Panc1 (cell line): ENCODE measurements at regions of chr11 and their contacts with region 1.

Region 1: DNA sequence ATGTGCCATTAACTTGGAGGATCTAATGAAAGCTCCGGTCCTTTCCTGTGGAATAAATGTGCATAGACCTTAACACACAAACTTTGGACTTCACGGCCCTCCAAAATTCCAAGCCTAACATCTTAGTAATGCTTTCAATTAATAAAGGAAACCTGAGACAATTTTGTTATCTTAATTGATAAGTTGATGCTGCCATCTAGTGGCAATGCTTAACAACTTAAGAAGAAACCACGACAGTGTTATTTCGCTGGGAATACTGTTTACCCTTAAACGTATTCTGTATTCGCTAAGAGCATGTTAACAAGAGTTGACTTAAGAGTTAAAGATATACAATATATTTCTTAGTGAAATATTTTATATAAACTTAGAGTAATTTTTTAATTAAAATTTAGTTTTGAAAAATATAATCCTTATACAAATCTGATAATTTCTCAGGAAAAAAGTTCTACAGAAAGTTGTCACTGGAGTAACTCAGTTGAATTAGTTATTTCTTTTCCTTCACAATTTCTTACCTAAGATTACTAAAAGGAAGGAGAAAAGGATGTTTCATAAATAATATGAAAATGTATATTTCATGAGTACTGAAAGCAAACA is 35.0 kb upstream of the OR9G4 start:
- DNase-seq: peak; percentile 18
- ATAC-seq: no peak; the same call in 1 of the 2 replicates
- H3K4me3 ChIP-seq: peak overlapping the region in 1 of 2 experiments; percentile 1; a peak in 1 of 4 replicates
- H3K27ac ChIP-seq: no peak overlapping the region
- H3K4me1 ChIP-seq: no peaks in the 10 kb centered on the region
- H3K27me3 ChIP-seq: no peaks in the 10 kb centered on the region
- CTCF ChIP-seq: peak; percentile 49; the same call in 1 of the 2 replicates

Region 2: GRCh38 chr11:55942785-55943392 is 840.7 kb before region 1 on chr11:
- CTCF ChIA-PET with region 1: no interaction called
- POLR2A ChIA-PET with region 1: no interaction called
- in situ Hi-C with region 1: no loop called
- intact Hi-C with region 1: loop called (anchors 2 kb)
- DNase-seq: peak; percentile 22
- ATAC-seq: no peak
- H3K4me3 ChIP-seq: no peak overlapping the region
- H3K27ac ChIP-seq: no peak overlapping the region
- H3K4me1 ChIP-seq: no peaks in the 10 kb centered on the region
- H3K27me3 ChIP-seq: no peaks in the 10 kb centered on the region
- CTCF ChIP-seq: peak; percentile 56; the same call in 1 of the 2 replicates

Region 3: GRCh38 chr11:56522008-56522407 is 261.5 kb before region 1 on chr11:
- CTCF ChIA-PET with region 1: no interaction called
- POLR2A ChIA-PET with region 1: no interaction called
- in situ Hi-C with region 1: no loop called
- intact Hi-C with region 1: loop called (anchors 10 kb)
- DNase-seq: no peak
- ATAC-seq: no peak
- H3K4me3 ChIP-seq: no peak overlapping the region
- H3K27ac ChIP-seq: no peak overlapping the region
- H3K4me1 ChIP-seq: no peaks in the 10 kb centered on the region
- H3K27me3 ChIP-seq: no peaks in the 10 kb centered on the region
- CTCF ChIP-seq: peak; percentile 24; the same call in 1 of the 2 replicates

Region 4: DNA sequence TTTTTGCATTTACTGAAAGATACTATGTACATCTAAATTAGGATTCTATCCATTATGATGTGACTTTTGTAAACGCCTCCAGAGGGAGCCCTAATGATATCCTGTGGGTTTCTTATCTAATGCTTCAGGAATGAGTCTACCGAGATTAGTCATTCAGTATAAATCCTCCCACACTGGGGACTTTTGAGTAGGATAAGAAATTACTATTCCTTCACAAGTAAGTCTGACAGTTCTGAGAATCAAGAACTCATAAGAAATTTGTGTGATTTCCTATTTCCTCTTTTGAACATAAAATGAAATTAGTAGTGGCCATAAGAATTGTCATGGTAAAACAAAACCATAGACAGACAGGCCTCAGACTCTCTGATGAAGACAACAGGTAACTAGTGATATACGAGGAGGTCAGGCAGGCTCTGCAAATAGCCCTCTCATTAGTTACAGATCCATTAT is 158.9 kb before region 1 on chr11:
- CTCF ChIA-PET with region 1: no interaction called
- POLR2A ChIA-PET with region 1: no interaction called
- in situ Hi-C with region 1: no loop called
- intact Hi-C with region 1: loop called (anchors 5 kb)
- DNase-seq: peak; percentile 27
- ATAC-seq: peak; percentile 69
- H3K4me3 ChIP-seq: no peak overlapping the region
- H3K27ac ChIP-seq: no peak overlapping the region
- H3K4me1 ChIP-seq: no peaks in the 10 kb centered on the region
- H3K27me3 ChIP-seq: no peaks in the 10 kb centered on the region
- CTCF ChIP-seq: peak; percentile 45; the same call in 1 of the 2 replicates

Region 5: DNA sequence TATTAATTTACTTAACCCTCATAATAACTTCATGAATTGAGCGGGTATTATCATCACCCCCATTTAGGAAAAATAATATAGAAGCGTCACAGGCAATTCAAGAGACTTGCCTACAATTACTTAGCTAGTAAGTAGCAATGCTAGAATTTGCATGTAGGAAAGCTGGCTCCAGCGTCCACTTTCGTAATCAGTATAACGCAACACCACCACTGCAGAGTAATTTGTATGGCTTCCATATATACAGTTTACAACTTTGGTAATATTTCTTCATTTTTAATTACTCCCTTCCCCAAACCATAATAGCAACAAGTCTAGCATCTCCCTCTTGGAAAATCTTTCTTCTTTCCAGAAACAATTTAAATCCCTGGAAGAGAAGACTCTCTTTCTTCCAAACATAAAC is 115.3 kb after region 1 on chr11:
- CTCF ChIA-PET with region 1: no interaction called
- POLR2A ChIA-PET with region 1: no interaction called
- in situ Hi-C with region 1: no loop called
- intact Hi-C with region 1: no loop called
- DNase-seq: no peak
- ATAC-seq: no peak
- H3K4me3 ChIP-seq: no peak overlapping the region
- H3K27ac ChIP-seq: no peak overlapping the region
- H3K4me1 ChIP-seq: no peaks in the 10 kb centered on the region
- H3K27me3 ChIP-seq: no peaks in the 10 kb centered on the region
- CTCF ChIP-seq: no peak

Region 6: DNA sequence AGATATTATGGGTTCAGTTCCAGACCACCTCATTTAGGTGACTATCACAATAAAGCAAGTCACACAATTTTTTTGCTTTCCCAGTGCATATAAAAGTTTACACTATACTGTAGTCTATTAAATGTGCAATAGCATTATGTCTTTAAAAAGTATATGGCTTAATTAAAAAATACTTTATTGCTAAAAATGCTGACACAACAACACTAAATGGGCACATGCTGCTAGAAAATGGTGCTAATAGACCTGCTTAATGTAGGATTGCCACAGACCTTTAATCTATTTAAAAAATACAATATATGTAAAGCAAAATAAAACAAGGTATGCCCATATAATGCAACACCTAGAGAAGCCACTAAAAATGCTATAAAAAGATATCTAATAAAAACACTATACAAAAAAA is 178.1 kb after region 1 on chr11:
- CTCF ChIA-PET with region 1: no interaction called
- POLR2A ChIA-PET with region 1: no interaction called
- in situ Hi-C with region 1: no loop called
- intact Hi-C with region 1: no loop called
- DNase-seq: no peak
- ATAC-seq: no peak
- H3K4me3 ChIP-seq: no peak overlapping the region
- H3K27ac ChIP-seq: no peak overlapping the region
- H3K4me1 ChIP-seq: no peaks in the 10 kb centered on the region
- H3K27me3 ChIP-seq: no peaks in the 10 kb centered on the region
- CTCF ChIP-seq: no peak

Region 7: DNA sequence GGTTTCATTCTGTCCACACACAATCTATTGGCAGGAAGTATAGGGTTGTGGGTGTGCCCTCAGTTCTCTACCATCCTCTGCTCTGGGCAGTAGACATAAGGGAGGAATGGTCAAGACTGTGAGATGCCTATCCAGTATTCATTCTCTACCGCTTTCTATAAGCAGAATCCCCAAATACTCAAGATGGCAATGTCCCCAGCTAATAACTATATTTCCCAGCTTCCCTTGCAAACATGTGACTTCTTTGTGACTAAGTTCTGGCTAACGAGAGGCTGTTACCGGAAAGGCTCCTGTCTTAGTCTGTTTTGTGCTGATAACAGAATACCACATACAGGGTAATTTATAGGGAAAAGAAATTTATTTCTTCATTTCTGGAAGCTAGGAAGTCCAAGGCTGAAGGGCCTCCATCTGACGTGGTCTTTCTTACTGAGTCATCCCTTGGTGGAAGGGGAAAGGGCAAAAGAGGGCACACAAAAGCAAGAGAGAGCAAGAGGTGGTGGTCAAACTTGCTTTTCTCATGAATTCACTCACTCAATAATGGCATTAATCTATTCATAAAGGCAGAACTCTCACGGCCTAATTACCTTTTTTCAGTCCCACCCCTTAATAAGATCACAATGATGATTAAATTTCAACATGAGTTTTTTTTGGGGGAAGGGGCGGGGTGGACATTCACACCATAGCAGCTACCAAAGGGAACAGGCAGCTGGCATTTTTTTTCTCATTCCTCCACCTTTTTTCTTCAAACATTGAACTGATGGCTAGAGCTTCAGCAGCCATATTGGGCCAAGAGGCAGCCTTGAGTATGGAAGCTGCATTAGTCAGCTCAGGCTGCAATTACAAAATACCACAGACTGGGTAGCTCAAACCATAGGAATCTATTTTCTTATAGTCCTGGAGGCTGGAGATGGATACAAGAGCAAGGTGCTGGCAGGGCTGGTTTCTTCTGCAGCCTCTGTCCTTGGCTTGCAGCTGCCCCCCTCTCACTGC is 1130.5 kb after region 1 on chr11:
- CTCF ChIA-PET with region 1: no interaction called
- POLR2A ChIA-PET with region 1: no interaction called
- in situ Hi-C with region 1: no loop called
- intact Hi-C with region 1: no loop called
- DNase-seq: no peak
- ATAC-seq: no peak
- H3K4me3 ChIP-seq: no peak overlapping the region
- H3K27ac ChIP-seq: no peak overlapping the region
- H3K4me1 ChIP-seq: no peaks in the 10 kb centered on the region
- H3K27me3 ChIP-seq: no peaks in the 10 kb centered on the region
- CTCF ChIP-seq: no peak

Region 8: DNA sequence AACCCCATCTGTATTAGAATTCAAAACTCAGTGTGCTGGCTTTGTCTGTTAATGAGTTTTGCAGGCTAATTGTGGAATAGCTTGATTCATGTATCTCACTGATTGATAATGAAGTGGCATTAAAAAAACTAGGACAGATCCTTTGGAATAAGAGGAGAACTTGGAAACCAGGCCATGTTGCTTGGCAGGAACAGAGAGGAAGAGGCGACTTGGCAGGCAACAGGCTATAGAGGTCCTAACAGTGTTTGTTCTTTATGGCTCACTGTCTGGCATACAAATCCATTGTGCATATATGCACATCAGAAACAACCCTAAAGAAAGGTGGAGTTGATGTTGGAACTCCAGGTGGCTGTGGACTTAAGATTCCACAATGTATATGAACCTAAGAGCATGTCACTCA is 1359.2 kb after region 1 on chr11:
- CTCF ChIA-PET with region 1: no interaction called
- POLR2A ChIA-PET with region 1: no interaction called
- in situ Hi-C with region 1: no loop called
- intact Hi-C with region 1: no loop called
- DNase-seq: no peak
- ATAC-seq: no peak
- H3K4me3 ChIP-seq: no peak overlapping the region
- H3K27ac ChIP-seq: no peak overlapping the region
- H3K4me1 ChIP-seq: no peaks in the 10 kb centered on the region
- H3K27me3 ChIP-seq: no peaks in the 10 kb centered on the region
- CTCF ChIP-seq: no peak